ENCODE measurements at regions of chr4 and their contacts with region 1.

Region 1: DNA sequence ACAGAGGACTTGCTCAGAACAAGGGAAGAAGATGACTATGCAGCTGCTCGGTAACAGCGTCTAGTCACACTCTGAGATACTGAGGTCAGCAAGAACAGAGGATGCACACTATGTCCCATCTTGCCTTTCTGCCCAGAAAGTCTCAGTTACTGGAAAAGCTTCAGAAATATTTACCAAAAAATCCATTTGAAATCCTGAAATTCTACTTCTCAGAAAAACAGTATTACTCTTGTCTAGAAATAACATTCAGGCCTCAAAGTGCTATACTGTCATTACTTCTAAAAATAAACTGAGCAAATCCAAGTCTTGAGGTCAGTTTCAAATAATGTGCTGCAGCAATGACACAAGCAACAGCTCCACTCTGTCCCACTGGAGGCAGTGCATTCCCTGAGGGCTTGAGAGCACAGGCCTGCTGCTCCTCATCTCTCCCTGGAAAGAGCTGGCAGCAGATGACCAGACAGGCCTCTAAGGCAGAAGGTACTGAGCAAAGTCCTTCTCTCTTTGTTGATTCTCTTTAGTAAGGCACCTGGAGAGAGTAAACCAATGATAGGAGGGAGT is 76.9 kb downstream of the CAMK2D start:
- DNase-seq: peak; percentile 77
- H3K4me3 Mint-ChIP-seq: peak overlapping the region; percentile 23
- H3K27ac Mint-ChIP-seq: peak overlapping the region; percentile 88
- H3K4me1 Mint-ChIP-seq: peaks cover 74% of the 10 kb centered on the region
- H3K27me3 Mint-ChIP-seq: no peaks in the 10 kb centered on the region

Region 2: DNA sequence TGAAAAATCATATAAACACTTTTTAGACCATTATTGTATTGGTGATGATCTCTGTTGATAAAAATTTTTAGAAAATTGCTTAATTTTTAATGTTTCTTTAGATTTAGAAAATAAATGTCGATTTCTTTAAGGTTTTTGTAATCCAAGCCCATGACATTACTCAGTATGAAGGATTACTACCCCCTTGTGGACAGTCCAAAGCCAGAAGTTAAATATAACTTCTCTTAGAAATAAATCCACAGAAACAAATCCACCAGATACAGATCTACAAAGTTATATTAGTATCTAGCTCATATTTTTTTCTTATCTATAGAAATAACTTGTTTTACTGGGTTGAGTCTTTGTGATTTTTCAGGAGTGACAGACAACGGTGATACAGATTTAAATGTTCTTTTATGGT is 1417.8 kb before region 1 on chr4:
- CTCF ChIA-PET with region 1: no interaction called
- intact Hi-C with region 1: loop called (anchors 5 kb)
- DNase-seq: no peak
- H3K4me3 Mint-ChIP-seq: no peak overlapping the region
- H3K27ac Mint-ChIP-seq: peak overlapping the region; percentile 71
- H3K4me1 Mint-ChIP-seq: peaks cover 33% of the 10 kb centered on the region
- H3K27me3 Mint-ChIP-seq: no peaks in the 10 kb centered on the region

Region 3: GRCh38 chr4:112448306-112449132 is 1236.1 kb before region 1 on chr4:
- CTCF ChIA-PET with region 1: no interaction called
- intact Hi-C with region 1: no loop called
- DNase-seq: no peak
- H3K4me3 Mint-ChIP-seq: no peak overlapping the region
- H3K27ac Mint-ChIP-seq: no peak overlapping the region
- H3K4me1 Mint-ChIP-seq: no peaks in the 10 kb centered on the region
- H3K27me3 Mint-ChIP-seq: no peaks in the 10 kb centered on the region

Region 4: GRCh38 chr4:113384600-113384999 is 300.0 kb before region 1 on chr4:
- CTCF ChIA-PET with region 1: no interaction called
- intact Hi-C with region 1: loop called (anchors 1 kb)
- DNase-seq: peak; percentile 18
- H3K4me3 Mint-ChIP-seq: no peak overlapping the region
- H3K27ac Mint-ChIP-seq: peak overlapping the region; percentile 64
- H3K4me1 Mint-ChIP-seq: peaks cover 32% of the 10 kb centered on the region
- H3K27me3 Mint-ChIP-seq: peaks cover 10% of the 10 kb centered on the region

Region 5: DNA sequence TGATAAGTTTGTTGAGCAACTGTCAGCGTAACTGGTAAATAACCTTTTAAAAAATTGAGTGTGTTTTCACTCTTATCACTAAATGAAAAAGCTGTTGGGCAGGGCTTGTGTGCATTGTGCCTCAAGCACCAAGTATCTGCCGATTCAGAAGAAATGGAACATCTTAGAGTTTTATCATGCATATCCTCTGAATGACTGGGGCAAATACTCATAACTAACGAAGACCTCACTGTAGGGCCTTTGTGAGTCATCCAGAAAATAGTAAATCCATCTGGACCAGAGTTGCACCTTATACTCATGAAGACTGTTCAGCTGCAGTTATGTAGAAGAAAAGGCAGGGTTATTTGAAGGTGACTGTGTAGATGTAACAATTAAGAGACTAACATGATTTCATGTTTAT is 145.2 kb before region 1 on chr4:
- CTCF ChIA-PET with region 1: no interaction called
- intact Hi-C with region 1: loop called (anchors 1 kb)
- DNase-seq: peak; percentile 39
- H3K4me3 Mint-ChIP-seq: no peak overlapping the region
- H3K27ac Mint-ChIP-seq: peak overlapping the region; percentile 67
- H3K4me1 Mint-ChIP-seq: peaks cover 33% of the 10 kb centered on the region
- H3K27me3 Mint-ChIP-seq: no peaks in the 10 kb centered on the region

Region 6: GRCh38 chr4:113636438-113636818 is 48.2 kb before region 1 on chr4:
- CTCF ChIA-PET with region 1: no interaction called
- intact Hi-C with region 1: loop called (anchors 1 kb)
- DNase-seq: peak; percentile 26
- H3K4me3 Mint-ChIP-seq: peak overlapping the region; percentile 23
- H3K27ac Mint-ChIP-seq: peak overlapping the region; percentile 83
- H3K4me1 Mint-ChIP-seq: peaks cover 46% of the 10 kb centered on the region
- H3K27me3 Mint-ChIP-seq: no peaks in the 10 kb centered on the region

Region 7: DNA sequence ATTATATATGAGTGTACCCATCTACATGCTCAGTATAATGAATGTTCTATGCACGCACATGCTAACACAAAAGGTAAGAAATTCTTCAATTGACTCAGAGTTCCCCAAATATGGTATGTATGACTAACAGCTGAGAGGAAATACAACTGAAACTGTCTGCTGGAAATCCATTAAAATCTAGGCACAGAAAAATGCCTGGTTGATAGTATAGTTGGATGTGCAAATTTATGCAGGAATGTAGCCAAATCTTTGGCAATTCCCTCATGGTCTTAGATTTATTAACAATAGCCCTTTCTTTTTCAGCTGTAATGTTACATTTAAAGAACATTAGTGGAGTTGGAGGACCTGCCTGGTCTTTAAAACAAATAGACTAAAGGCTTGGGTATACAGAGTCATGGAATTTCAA is 71.4 kb after region 1 on chr4:
- CTCF ChIA-PET with region 1: no interaction called
- intact Hi-C with region 1: loop called (anchors 1 kb)
- DNase-seq: no peak
- H3K4me3 Mint-ChIP-seq: no peak overlapping the region
- H3K27ac Mint-ChIP-seq: no peak overlapping the region
- H3K4me1 Mint-ChIP-seq: peaks cover 47% of the 10 kb centered on the region
- H3K27me3 Mint-ChIP-seq: no peaks in the 10 kb centered on the region

Region 8: DNA sequence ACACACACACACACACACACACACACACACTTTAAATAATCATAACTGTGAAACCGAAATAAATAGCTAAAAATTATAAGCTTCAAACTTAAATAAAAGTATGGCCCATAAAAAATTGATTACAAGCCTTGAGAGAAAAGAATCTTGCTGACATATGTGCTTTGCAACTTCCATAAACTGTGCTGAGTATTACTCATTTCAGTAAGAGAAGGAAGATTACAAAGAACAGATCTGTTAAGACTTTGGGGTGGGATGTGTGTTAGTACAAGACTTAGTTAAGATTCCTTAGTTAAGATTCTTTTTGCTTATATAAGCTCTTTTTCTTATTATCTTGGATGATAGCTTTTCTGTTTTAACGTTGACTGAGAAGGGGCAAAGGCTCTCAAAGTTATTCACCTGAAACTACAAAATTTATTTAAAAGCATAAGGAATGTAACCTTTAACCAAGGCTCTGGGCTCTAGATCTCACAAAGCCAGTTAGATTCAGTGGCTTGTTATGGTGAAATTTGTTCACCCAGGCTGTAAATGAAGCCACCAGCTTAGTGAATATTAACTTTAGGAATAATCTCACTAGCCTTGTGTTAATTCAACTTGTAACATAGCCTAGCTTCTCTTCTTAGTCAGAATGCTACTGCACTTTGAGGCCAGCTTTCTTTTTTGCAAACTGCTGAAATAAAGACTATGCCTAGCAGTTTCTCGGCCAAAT is 236.6 kb after region 1 on chr4:
- CTCF ChIA-PET with region 1: no interaction called
- intact Hi-C with region 1: no loop called
- DNase-seq: no peak
- H3K4me3 Mint-ChIP-seq: no peak overlapping the region
- H3K27ac Mint-ChIP-seq: no peak overlapping the region
- H3K4me1 Mint-ChIP-seq: peaks cover 5% of the 10 kb centered on the region
- H3K27me3 Mint-ChIP-seq: no peaks in the 10 kb centered on the region

Measured in activated naive CD4-positive, alpha-beta T cell treated with anti-CD3 and anti-CD28 coated beads for 36 hours (primary cell).